HepG2 (cell line): ENCODE measurements at regions of chr11 and their contacts with region 1.

Region 1: DNA sequence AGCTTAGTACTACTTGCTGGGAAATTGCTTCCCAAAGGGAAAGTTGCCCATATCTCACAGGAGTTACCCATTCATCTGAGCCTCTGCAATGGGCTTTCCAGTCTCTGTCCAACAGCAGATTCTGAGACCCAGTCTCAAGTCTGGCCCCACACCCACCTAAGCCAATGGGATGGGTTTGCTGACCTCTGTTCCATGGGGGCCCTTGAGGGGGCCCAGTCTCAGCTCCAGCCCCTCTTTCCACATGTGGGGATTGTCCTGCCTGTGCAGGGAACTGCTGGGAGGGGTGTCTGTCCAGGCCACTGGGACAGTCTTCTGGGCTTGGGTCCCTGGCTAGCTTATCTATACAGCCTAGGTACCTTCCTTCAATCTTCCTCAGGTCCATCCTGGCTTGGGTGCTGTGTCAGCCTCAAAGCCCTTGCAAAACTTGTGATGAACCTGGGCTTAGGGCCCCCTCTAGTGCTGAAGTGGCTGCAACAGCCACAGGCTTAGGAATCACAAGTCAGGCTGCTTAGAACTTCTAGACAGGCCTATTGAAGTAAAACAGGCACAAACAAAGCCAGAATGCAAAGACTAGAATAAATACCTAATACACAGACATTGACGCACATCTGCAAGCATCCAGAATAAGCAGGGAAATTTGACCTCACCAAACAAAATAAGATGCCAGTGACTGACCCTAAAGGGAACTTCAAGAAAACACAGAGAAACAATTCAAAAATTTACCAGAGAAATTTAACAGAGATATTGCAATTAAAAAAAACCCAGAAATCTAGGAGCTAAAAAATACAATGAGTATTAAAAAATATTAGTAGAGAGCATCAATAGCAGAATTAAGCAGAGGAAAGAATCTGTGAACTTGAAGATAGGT is 11.7 kb upstream of the PATL1 start:
- DNase-seq: peak; percentile 73
- ATAC-seq: peak; percentile 99
- H3K4me3 ChIP-seq: no peak overlapping the region
- H3K27ac ChIP-seq: no peak overlapping the region
- H3K4me1 ChIP-seq: peaks cover 38% of the 10 kb centered on the region
- H3K27me3 ChIP-seq: no peaks in the 10 kb centered on the region
- CTCF ChIP-seq: peak; percentile 94
- EP300 ChIP-seq: no peak
- POLR2A ChIP-seq: no peak
- RAD21 ChIP-seq: peak; percentile 85

Region 2: DNA sequence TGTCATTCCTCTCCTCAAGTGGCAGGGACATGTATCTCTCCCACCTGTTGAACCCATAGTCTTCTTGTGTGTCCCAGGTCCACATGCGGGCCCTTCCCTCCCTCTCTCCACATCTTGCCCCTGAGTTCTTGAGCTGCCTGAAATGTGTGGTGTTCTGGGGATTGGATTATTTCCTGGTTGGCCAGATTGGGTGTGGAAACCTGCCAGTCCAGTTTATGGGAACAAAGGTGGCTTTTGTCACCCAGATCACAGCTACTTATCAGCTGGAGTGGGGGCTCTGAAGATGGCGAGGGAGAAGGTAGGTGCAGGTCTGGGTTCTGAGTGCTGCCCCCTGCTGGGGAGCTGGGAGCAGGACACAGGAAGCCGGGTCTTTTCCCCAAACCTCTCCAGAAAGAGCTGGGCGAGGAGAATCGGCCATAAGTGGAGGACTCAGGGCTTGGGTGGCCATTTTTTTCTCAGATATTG is 494.4 kb before region 1 on chr11:
- CTCF ChIA-PET with region 1: no interaction called
- POLR2A ChIA-PET with region 1: no interaction called
- in situ Hi-C with region 1: loop called (anchors 25 kb)
- intact Hi-C with region 1: no loop called
- DNase-seq: peak; percentile 50
- ATAC-seq: peak; percentile 82
- H3K4me3 ChIP-seq: no peak overlapping the region
- H3K27ac ChIP-seq: no peak overlapping the region
- H3K4me1 ChIP-seq: peaks cover 22% of the 10 kb centered on the region
- H3K27me3 ChIP-seq: no peaks in the 10 kb centered on the region
- CTCF ChIP-seq: peak; percentile 58
- EP300 ChIP-seq: no peak
- POLR2A ChIP-seq: no peak
- RAD21 ChIP-seq: peak; percentile 34; the same call in 1 of the 2 replicates

Region 3: GRCh38 chr11:59534676-59535075 is 145.8 kb before region 1 on chr11:
- CTCF ChIA-PET with region 1: interaction called, 25 read pairs
- POLR2A ChIA-PET with region 1: no interaction called
- in situ Hi-C with region 1: loop called (anchors 5 kb)
- intact Hi-C with region 1: loop called (anchors 1 kb)
- DNase-seq: no peak
- ATAC-seq: no peak
- H3K4me3 ChIP-seq: no peak overlapping the region
- H3K27ac ChIP-seq: no peak overlapping the region
- H3K4me1 ChIP-seq: peaks cover 16% of the 10 kb centered on the region; the same call in 1 of the 2 replicates
- H3K27me3 ChIP-seq: no peaks in the 10 kb centered on the region
- CTCF ChIP-seq: no peak
- EP300 ChIP-seq: no peak
- POLR2A ChIP-seq: no peak
- RAD21 ChIP-seq: no peak

Region 4: GRCh38 chr11:59542142-59542810 is 138.2 kb before region 1 on chr11:
- CTCF ChIA-PET with region 1: interaction called, 25 read pairs
- POLR2A ChIA-PET with region 1: no interaction called
- in situ Hi-C with region 1: loop called (anchors 5 kb)
- intact Hi-C with region 1: loop called (anchors 1 kb)
- DNase-seq: no peak
- ATAC-seq: no peak
- H3K4me3 ChIP-seq: no peak overlapping the region
- H3K27ac ChIP-seq: no peak overlapping the region
- H3K4me1 ChIP-seq: peaks cover 5% of the 10 kb centered on the region; the same call in 1 of the 2 replicates
- H3K27me3 ChIP-seq: no peaks in the 10 kb centered on the region; a peak in 1 of 5 replicates
- CTCF ChIP-seq: no peak
- EP300 ChIP-seq: no peak
- POLR2A ChIP-seq: no peak
- RAD21 ChIP-seq: no peak